ENCODE measurements at regions of chr5 and their contacts with region 1.

Region 1: DNA sequence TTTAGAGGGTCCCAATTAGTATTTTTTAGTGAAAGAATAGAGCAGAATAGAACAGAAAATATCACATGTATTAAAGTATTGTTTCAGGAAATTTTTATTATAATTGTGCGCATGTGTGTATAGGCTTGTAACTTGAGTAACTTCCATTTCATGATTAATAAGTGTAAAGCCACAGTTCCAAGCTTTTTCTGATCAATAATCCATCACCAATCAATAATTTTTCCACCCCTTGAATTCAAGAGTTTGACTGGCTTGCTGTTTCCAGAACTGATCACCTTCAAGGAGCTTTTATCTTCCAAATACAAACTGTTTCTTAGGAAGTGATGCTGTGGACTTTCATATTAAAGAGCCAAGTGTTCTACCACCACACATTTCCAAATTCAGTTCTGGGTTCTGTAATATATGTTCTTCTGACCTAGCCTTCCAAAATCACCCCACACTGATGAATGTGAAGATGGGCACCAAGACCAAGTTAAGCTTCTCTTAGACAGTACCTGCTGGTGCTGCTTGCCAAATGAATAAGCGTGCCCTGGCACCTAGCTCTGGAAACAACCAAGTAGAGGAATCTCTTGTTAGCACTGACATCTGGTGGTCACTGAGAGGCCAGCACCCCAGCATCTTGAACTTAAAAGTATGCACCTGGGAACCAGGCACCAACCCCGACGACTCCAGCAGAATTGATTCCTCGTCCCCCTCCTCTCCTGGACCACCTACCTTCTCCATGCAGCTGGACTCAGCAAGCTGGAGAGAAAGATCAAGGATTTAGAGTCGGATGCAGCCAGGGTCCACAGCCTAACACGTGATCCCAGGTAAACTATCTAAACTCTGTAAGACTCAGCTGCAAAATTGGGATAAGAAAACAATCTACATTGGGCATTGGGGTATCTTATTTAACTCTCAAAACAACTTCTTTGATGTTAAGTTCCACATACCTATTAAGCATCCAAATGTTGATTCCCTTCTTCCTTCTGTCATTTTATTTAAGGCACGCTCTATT is 89.6 kb downstream of the SLC1A3 start:
- DNase-seq: peak; percentile 61
- ATAC-seq: peak; percentile 65
- H3K4me3 ChIP-seq: no peak overlapping the region
- H3K27ac ChIP-seq: no peak overlapping the region
- H3K4me1 ChIP-seq: peaks cover 2% of the 10 kb centered on the region; the same call in 1 of the 2 replicates
- H3K27me3 ChIP-seq: peaks cover 15% of the 10 kb centered on the region
- CTCF ChIP-seq: peak; percentile 70
- POLR2A ChIP-seq: no peak
- RAD21 ChIP-seq: peak; percentile 68

Region 2: GRCh38 chr5:36414869-36415282 is 281.1 kb before region 1 on chr5:
- CTCF ChIA-PET with region 1: interaction called, 9 read pairs
- POLR2A ChIA-PET with region 1: no interaction called
- dilution Hi-C with region 1: no loop called
- in situ Hi-C with region 1: loop called (anchors 5 kb)
- intact Hi-C with region 1: loop called (anchors 1 kb)
- DNase-seq: peak; percentile 54
- ATAC-seq: peak; percentile 72
- H3K4me3 ChIP-seq: no peak overlapping the region
- H3K27ac ChIP-seq: no peak overlapping the region
- H3K4me1 ChIP-seq: no peaks in the 10 kb centered on the region
- H3K27me3 ChIP-seq: peaks cover 13% of the 10 kb centered on the region
- CTCF ChIP-seq: peak; percentile 67
- POLR2A ChIP-seq: no peak
- RAD21 ChIP-seq: peak; percentile 78

Region 3: DNA sequence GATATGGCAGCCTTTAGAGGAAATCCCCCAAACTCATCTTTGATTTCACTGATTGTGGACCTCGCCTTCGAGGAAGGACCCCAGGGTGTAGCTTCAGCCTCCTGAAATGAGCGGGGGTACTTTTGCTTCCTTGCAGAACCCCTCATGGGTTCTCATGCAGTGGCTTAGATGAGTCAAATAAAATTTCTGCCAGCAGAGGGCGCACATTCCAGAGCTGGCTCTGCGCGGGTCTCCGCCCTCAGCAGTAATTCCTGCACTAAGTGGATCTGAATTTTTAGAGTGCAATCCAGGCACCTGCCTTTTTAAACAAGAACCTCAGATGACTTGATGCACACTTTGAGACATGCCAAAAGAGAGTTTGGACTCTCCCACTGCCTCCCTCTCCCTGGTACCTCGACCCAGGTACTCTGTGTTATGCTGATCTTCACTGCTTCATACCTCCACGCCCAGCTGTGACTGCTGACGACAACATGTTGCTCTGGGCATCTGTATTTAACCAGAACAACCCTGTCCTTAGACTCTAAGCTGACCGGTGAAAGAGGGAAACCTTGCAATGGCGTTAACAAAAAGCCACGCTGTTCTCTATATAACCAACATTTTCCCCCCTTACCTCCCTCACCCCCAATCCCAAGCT is 1569.7 kb after region 1 on chr5:
- CTCF ChIA-PET with region 1: interaction called, 10 read pairs
- POLR2A ChIA-PET with region 1: no interaction called
- dilution Hi-C with region 1: no loop called
- in situ Hi-C with region 1: no loop called
- intact Hi-C with region 1: no loop called
- DNase-seq: peak; percentile 40
- ATAC-seq: peak; percentile 92
- H3K4me3 ChIP-seq: no peak overlapping the region
- H3K27ac ChIP-seq: no peak overlapping the region
- H3K4me1 ChIP-seq: no peaks in the 10 kb centered on the region
- H3K27me3 ChIP-seq: peaks cover 16% of the 10 kb centered on the region
- CTCF ChIP-seq: peak; percentile 63
- POLR2A ChIP-seq: no peak
- RAD21 ChIP-seq: peak; percentile 32

Measured in IMR-90 (cell line).